ENCODE measurements at regions of chr15 and their contacts with region 1.

Region 1: GRCh38 chr15:60179786-60180391 is 175.8 kb downstream of the FOXB1 start:
- DNase-seq: peak; percentile 25
- H3K4me3 ChIP-seq: no peak overlapping the region
- H3K27ac ChIP-seq: no peak overlapping the region
- H3K4me1 ChIP-seq: no peaks in the 10 kb centered on the region
- H3K27me3 ChIP-seq: no peaks in the 10 kb centered on the region
- CTCF ChIP-seq: peak; percentile 75

Region 2: GRCh38 chr15:59689626-59690236 is 490.2 kb before region 1 on chr15:
- intact Hi-C with region 1: loop called (anchors 5 kb)
- DNase-seq: peak; percentile 94
- H3K4me3 ChIP-seq: peak overlapping the region; percentile 78
- H3K27ac ChIP-seq: peak overlapping the region; percentile 100
- H3K4me1 ChIP-seq: peaks cover 8% of the 10 kb centered on the region
- H3K27me3 ChIP-seq: no peaks in the 10 kb centered on the region
- CTCF ChIP-seq: no peak

Region 3: DNA sequence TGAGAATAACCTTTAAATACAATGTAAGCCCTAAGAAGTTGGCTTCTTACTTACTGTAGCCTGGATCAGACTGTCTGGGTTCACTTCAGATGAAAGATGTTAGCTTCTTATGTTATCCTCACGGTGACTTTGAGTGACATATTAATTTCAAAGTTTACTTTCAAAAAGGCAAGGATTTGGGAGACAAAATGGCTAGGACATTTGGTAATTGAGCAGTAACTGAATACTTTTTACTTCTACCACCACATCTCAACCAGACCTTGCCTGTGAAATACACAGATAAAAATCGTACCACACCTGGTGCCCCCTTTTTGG is 454.8 kb before region 1 on chr15:
- intact Hi-C with region 1: loop called (anchors 10 kb)
- DNase-seq: no peak
- H3K4me3 ChIP-seq: no peak overlapping the region
- H3K27ac ChIP-seq: no peak overlapping the region
- H3K4me1 ChIP-seq: no peaks in the 10 kb centered on the region
- H3K27me3 ChIP-seq: no peaks in the 10 kb centered on the region
- CTCF ChIP-seq: no peak

Region 4: DNA sequence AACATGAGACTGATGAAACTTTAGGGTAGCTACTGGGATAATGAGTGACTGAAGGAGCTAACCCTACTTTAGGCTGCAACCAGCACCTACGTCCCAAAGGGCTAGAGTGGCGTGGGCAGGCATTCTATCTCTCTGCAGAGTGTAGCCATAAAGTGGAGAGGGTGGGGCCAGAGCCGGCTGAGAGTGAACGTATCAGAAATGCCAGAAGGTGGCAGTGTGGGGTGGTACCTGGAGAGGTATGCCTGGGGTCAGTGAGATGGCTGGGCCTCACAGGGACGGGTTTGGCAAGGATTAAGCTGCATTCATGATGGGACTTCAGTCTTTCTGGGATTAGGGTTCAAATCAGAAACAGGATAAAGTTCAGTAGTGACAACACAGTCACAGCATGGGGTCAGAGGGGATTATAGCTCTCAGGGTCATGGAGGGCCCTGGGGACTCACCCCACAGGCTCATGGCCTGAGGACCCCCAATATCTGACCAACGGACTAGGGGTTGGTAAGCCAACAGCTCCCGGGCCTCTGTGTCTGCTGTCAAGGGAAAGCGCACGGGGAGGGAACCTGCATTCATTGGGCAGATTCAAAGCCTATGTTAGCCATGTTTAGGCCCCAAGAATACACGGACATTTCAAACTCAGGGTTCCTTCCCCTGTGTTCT is 262.3 kb before region 1 on chr15:
- intact Hi-C with region 1: loop called (anchors 5 kb)
- DNase-seq: peak; percentile 70
- H3K4me3 ChIP-seq: no peak overlapping the region
- H3K27ac ChIP-seq: no peak overlapping the region
- H3K4me1 ChIP-seq: no peaks in the 10 kb centered on the region
- H3K27me3 ChIP-seq: no peaks in the 10 kb centered on the region
- CTCF ChIP-seq: no peak